Activated naive CD4-positive, alpha-beta T cell treated with anti-CD3 and anti-CD28 coated beads for 36 hours (primary cell): ENCODE measurements at regions of chr22 and their contacts with region 1.

Region 1: GRCh38 chr22:40578171-40578570 is 58.3 kb downstream of the MRTFA start:
- DNase-seq: peak; percentile 74
- H3K4me3 Mint-ChIP-seq: peak overlapping the region; percentile 34
- H3K27ac Mint-ChIP-seq: peak overlapping the region; percentile 92
- H3K4me1 Mint-ChIP-seq: peaks cover 23% of the 10 kb centered on the region
- H3K27me3 Mint-ChIP-seq: no peaks in the 10 kb centered on the region

Region 2: GRCh38 chr22:40560551-40560950 is 17.6 kb before region 1 on chr22:
- CTCF ChIA-PET with region 1: no interaction called
- intact Hi-C with region 1: loop called (anchors 2 kb)
- DNase-seq: peak; percentile 54
- H3K4me3 Mint-ChIP-seq: no peak overlapping the region
- H3K27ac Mint-ChIP-seq: peak overlapping the region; percentile 32
- H3K4me1 Mint-ChIP-seq: peaks cover 20% of the 10 kb centered on the region
- H3K27me3 Mint-ChIP-seq: no peaks in the 10 kb centered on the region

Region 3: DNA sequence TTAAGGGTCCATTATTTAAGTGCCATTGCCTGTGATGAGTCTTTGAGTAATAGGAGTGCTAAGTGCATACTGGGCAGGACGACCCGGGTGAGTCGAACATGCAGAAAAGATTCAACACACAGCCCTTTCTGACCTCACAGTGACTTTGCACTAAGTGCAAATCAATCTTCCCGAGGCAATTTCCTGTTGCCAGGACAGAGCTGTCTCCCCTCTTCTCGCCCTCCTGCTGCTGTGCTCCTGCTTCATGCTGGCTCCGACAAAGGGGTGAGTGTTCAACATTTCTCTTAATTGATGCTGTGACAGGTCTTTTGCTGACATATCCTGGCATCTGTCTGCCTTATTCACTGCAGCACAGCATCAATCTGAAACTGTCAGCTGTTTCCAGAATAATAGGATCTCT is 143.1 kb after region 1 on chr22:
- CTCF ChIA-PET with region 1: no interaction called
- intact Hi-C with region 1: no loop called
- DNase-seq: peak; percentile 27
- H3K4me3 Mint-ChIP-seq: no peak overlapping the region
- H3K27ac Mint-ChIP-seq: no peak overlapping the region
- H3K4me1 Mint-ChIP-seq: peaks cover 11% of the 10 kb centered on the region
- H3K27me3 Mint-ChIP-seq: no peaks in the 10 kb centered on the region